Dorsolateral prefrontal cortex (tissue), 120 donors: ENCODE measurements at regions of chr15 and their contacts with region 1.

Region 1: GRCh38 chr15:93250950-93251349 is 161.9 kb upstream of the RGMA start:
- DNase-seq: no peak
- H3K4me3 ChIP-seq: no peak overlapping the region
- H3K27ac ChIP-seq: no peak overlapping the region
- H3K27me3 ChIP-seq: peaks cover 0 to 13% (median 0%) of the 10 kb centered on the region in 45 donors
- CTCF ChIP-seq: no peak

Region 2: DNA sequence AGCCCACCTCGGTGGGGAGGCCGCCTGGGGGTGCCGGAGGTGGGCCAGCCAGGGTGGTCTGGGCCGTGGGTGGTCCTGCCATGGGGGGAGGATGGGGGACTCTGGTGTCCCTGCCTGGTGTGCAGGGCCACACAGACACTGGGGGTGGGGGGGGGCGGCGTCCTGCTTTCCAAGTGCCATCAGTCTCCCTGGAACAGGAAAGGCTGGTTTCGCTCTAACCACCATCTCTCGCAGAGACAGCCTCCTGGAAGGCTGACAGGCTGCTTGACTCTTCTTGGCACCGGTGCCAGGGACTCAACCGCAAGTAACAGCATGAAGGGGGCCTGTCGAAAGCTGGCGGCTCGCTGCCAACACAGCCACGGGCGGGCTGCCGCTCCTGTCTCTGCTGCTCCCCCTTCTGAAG is 202.2 kb before region 1 on chr15:
- intact Hi-C with region 1: no loop called
- DNase-seq: peak in 2 of 10 donors; percentile 58 to 63
- H3K4me3 ChIP-seq: no peak overlapping the region
- H3K27ac ChIP-seq: peak overlapping the region in 2 of 59 donors; percentile 2 to 38
- H3K27me3 ChIP-seq: peaks cover 0 to 7% (median 0%) of the 10 kb centered on the region in 45 donors
- CTCF ChIP-seq: no peak

Region 3: GRCh38 chr15:93631958-93632618 is 381.1 kb after region 1 on chr15:
- intact Hi-C with region 1: loop called in 1 of 2 experiments (anchors 5 kb)
- DNase-seq: no peak
- H3K4me3 ChIP-seq: no peak overlapping the region
- H3K27ac ChIP-seq: no peak overlapping the region
- H3K27me3 ChIP-seq: no peaks in the 10 kb centered on the region
- CTCF ChIP-seq: no peak